A549 (cell line): ENCODE measurements at regions of chr10 and their contacts with region 1.

Region 1: DNA sequence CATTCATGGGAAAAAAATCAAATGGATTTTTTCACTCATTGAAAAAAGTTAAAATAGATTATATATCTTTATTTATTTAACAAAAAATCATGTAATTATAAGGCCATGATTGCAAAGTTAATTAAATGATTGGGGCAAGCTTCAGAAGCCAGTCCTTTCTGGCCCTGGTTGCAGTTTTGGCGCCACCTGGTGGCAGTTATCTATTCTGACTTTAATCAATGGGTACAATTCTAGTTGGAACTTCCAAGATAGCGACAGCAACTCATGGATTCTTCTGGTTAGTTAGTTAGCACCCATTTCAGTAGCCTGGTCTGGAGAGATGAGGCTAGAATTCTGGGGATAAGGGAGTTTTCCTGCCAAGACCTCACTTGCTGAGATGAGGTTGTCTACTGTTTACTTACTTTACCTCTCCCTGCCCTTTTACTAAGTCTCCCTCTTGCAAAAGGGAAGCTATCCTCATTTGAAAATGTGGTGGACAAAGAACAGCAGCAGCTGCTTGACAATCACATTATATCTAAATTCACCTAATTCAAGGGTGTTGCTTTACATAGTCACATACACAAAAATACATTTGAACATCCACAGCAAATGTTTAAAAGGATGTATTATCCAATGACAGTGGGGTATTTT is 42.3 kb downstream of the NOC3L start:
- DNase-seq: peak; percentile 33 to 61
- ATAC-seq: peak; percentile 63 to 77; a peak in 5 of 6 replicates
- H3K4me3 ChIP-seq: no peak overlapping the region
- H3K27ac ChIP-seq: no peak overlapping the region
- H3K4me1 ChIP-seq: no peaks in the 10 kb centered on the region
- CTCF ChIP-seq: peak; percentile 96
- EP300 ChIP-seq: no peak
- POLR2A ChIP-seq: no peak
- RAD21 ChIP-seq: peak; percentile 81 to 82

Region 2: DNA sequence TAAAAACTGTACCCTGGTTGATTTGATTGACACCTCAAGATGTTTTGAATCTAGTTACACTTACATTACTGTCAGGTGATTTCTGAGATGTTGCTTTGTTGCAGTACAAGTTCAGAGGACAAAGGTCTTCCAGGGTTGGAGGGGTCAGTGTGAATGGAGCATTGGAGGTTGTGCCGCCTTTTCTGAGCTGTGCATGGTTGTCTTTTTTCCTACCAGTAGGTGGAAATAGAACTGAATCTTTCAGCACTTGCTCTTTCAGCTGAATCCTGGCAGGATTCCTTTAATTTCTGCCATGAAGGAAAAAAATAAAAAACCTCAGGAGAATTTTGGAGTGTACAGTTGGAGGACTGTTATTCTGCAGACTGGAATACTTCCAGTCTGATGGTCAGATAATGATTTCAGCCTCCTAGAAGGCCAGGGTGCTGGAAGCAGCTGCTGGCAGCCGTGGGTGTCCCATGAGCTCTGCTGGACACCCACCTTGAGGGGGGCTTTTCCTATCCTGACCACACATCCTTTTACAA is 244.0 kb before region 1 on chr10:
- CTCF ChIA-PET with region 1: interaction called, 16 read pairs
- POLR2A ChIA-PET with region 1: no interaction called
- DNase-seq: peak; percentile 36 to 37
- ATAC-seq: peak; percentile 93 to 95
- H3K4me3 ChIP-seq: no peak overlapping the region
- H3K27ac ChIP-seq: peak overlapping the region in 1 of 2 experiments; percentile 62; a peak in 4 of 6 replicates
- H3K4me1 ChIP-seq: peaks cover 30% of the 10 kb centered on the region
- CTCF ChIP-seq: peak; percentile 52
- EP300 ChIP-seq: no peak
- POLR2A ChIP-seq: no peak
- RAD21 ChIP-seq: peak; percentile 70 to 77

Region 3: DNA sequence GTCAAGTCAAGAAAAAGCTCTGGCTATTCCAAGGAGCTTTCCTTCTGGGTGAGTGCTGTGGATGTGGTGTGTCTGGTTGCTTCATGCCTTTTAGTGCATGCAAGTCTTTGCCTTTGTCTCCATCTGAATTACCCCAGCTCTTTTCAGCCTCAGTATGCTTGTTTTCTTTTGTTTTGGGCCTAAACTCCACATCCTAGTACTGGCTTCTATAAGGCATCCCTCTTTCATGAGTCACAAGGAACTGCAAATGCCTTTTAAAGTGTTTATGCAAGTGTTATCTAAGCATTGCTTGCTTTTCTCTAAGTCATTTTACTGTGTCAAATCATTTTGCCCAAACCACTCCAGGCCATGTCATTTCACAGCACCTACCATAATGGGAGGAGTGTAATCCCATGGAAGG is 194.5 kb before region 1 on chr10:
- CTCF ChIA-PET with region 1: no interaction called
- POLR2A ChIA-PET with region 1: no interaction called
- DNase-seq: peak in 1 of 2 experiments; percentile 20
- ATAC-seq: no peak
- H3K4me3 ChIP-seq: no peak overlapping the region
- H3K27ac ChIP-seq: peak overlapping the region; percentile 81 to 91
- H3K4me1 ChIP-seq: peaks cover 73% of the 10 kb centered on the region
- CTCF ChIP-seq: no peak
- EP300 ChIP-seq: no peak
- POLR2A ChIP-seq: no peak
- RAD21 ChIP-seq: no peak

Region 4: DNA sequence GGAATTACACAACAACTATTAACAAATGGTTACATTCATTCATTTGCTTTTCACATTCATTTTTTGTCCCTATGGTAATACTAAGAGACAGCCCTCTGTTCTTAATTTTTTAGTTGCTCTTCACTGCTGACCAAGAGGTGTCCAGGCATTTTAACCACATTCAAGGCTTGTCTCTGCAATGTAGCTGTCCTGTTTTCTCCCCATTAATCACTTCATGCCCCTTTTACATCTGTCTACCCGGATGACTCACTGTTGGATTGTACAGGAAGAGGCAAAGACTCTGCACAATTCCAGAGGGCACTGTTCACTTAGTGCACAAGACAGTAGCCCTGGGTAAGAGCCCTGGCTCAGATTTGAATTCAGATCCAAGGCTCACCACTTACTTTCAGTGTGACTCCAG is 126.1 kb before region 1 on chr10:
- CTCF ChIA-PET with region 1: no interaction called
- POLR2A ChIA-PET with region 1: no interaction called
- DNase-seq: peak in 1 of 2 experiments; percentile 35
- ATAC-seq: peak; percentile 88 to 90
- H3K4me3 ChIP-seq: no peak overlapping the region
- H3K27ac ChIP-seq: 0 out of 6 replicates have a peak overlapping the region, but pooled peaks of 1 of the 2 experiments have one; percentile 0
- H3K4me1 ChIP-seq: peaks cover 18% of the 10 kb centered on the region
- CTCF ChIP-seq: no peak; the same call in 2 of the 3 replicates
- EP300 ChIP-seq: no peak
- POLR2A ChIP-seq: no peak
- RAD21 ChIP-seq: peak in 1 of 2 experiments; percentile 14; a peak in 1 of 5 replicates

Region 5: GRCh38 chr10:94299417-94299816 is 21.0 kb before region 1 on chr10:
- CTCF ChIA-PET with region 1: interaction called, 12 read pairs
- POLR2A ChIA-PET with region 1: no interaction called
- DNase-seq: no peak
- ATAC-seq: no peak
- H3K4me3 ChIP-seq: no peak overlapping the region
- H3K27ac ChIP-seq: no peak overlapping the region
- H3K4me1 ChIP-seq: no peaks in the 10 kb centered on the region
- CTCF ChIP-seq: no peak
- EP300 ChIP-seq: no peak
- POLR2A ChIP-seq: no peak
- RAD21 ChIP-seq: no peak

Region 6: DNA sequence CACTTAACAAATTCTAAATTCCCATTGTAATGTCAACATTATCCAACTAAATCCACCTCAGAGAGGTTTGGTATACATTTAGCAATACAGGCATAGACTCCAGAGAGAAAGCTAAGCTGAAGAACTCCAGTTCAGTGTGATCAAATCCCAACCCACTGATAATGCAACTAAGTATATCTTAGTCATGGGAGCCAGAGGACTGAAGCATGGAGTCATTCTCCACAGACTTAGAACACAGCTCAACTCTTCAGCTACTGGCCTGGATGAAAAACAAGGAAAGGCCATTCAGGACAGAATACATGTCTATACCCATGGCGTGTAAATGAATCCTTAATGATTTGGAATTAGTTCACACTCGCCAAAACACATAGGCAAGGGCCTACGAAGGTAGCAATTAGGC is 14.5 kb after region 1 on chr10:
- CTCF ChIA-PET with region 1: interaction called, 40 read pairs
- POLR2A ChIA-PET with region 1: no interaction called
- DNase-seq: no peak
- ATAC-seq: no peak
- H3K4me3 ChIP-seq: no peak overlapping the region
- H3K27ac ChIP-seq: no peak overlapping the region
- H3K4me1 ChIP-seq: peaks cover 7% of the 10 kb centered on the region; the same call in 1 of the 3 replicates
- CTCF ChIP-seq: no peak
- EP300 ChIP-seq: no peak
- POLR2A ChIP-seq: no peak
- RAD21 ChIP-seq: no peak

Region 7: DNA sequence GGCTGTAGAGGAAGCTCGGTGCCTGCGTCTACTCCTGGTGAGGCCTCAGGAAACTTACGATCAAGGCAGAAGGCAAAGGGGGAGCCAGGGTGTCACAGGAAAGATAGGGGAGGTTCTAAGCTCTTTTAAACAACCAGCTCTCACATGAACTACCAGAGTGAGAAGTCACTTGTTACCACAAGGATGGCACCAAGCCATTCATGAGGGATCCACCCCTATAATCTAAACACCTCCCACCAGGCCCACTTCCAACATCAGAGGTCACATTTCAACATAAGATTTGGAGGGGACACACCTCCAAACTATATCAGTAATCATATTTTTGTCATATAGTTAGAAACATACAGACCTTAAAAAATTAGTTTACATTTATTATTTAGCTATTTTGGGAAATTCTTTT is 32.9 kb after region 1 on chr10:
- CTCF ChIA-PET with region 1: interaction called, 10 read pairs
- POLR2A ChIA-PET with region 1: no interaction called
- DNase-seq: no peak
- ATAC-seq: no peak
- H3K4me3 ChIP-seq: no peak overlapping the region
- H3K27ac ChIP-seq: no peak overlapping the region
- H3K4me1 ChIP-seq: no peaks in the 10 kb centered on the region
- CTCF ChIP-seq: no peak
- EP300 ChIP-seq: no peak
- POLR2A ChIP-seq: no peak
- RAD21 ChIP-seq: no peak

Region 8: DNA sequence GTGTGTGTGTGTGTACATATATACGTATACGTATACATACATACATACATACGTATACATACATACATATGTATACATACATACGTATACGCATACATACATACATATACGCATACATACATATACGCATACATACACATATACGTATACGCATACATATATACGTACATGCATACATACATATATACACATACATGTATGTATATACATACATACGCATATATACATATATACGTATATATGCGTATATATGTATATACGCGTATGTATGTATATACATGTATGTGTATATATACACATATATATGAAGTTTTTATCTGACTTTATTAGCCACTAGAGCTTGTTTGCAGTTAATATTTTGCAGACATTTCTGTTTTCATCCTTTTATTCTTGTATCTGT is 145.3 kb after region 1 on chr10:
- CTCF ChIA-PET with region 1: no interaction called
- POLR2A ChIA-PET with region 1: no interaction called
- DNase-seq: no peak
- ATAC-seq: no peak
- H3K4me3 ChIP-seq: no peak overlapping the region
- H3K27ac ChIP-seq: no peak overlapping the region
- H3K4me1 ChIP-seq: no peaks in the 10 kb centered on the region
- CTCF ChIP-seq: no peak
- EP300 ChIP-seq: no peak
- POLR2A ChIP-seq: no peak
- RAD21 ChIP-seq: no peak